PC-3 (cell line): ENCODE measurements at regions of chr4 and their contacts with region 1.

Region 1: GRCh38 chr4:1154523-1155182 is 17.7 kb downstream of the SPON2 start:
- DNase-seq: no peak
- ATAC-seq: no peak
- H3K4me3 ChIP-seq: no peak overlapping the region
- H3K27ac ChIP-seq: no peak overlapping the region
- H3K4me1 ChIP-seq: peaks cover 14% of the 10 kb centered on the region
- H3K27me3 ChIP-seq: peaks cover 5% of the 10 kb centered on the region
- CTCF ChIP-seq: no peak

Region 2: DNA sequence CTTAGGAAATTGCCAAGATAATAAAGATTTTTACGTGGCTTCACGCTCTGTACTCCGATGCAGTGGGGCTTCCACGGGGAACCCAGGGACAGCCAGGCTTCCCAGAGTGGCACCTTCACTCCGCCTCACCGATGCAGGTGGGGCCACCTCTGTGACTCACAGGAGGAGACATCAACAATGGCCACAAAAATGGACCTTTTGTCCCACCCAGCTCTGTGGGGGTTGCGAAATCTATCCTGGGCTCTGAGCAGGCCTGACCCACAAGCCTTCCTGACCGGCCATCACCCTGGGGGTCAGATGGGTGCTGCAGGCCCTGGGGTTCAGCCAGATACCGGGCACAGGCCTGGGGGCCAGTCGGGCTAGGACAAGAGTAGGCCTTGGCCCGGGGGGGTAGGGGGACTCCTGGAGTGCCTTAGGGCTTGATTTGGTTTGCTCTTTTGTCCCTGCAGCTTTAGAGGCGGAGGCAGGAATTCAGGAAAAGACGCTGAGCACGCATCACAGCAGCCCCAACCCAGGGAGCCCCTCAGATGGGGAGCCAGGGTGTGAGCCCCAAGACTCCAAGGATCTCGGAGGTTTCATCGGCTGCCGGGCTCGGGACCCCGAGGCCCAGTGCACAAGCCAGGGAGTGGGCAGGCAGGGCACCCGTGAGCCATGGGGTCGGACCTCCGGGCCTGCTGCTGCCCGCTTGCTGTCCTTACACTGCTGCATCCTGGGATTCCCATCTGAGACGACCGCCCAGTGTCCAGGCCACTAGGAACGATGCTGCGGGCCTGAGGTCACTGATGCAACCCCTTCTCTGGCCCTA is 388.1 kb after region 1 on chr4:
- CTCF ChIA-PET with region 1: no interaction called
- POLR2A ChIA-PET with region 1: interaction called, 13 read pairs
- intact Hi-C with region 1: no loop called
- DNase-seq: peak; percentile 49
- ATAC-seq: no peak
- H3K4me3 ChIP-seq: no peak overlapping the region
- H3K27ac ChIP-seq: peak overlapping the region; percentile 16; the same call in 1 of the 2 replicates
- H3K4me1 ChIP-seq: peaks cover 34% of the 10 kb centered on the region
- H3K27me3 ChIP-seq: no peaks in the 10 kb centered on the region
- CTCF ChIP-seq: no peak